Right cardiac atrium (tissue), 5 donors: ENCODE measurements at regions of chr2 and their contacts with region 1.

Region 1: GRCh38 chr2:52558265-52558664 is 1209.3 kb upstream of the CHAC2 start:
- DNase-seq: no peak
- ATAC-seq: no peak
- H3K4me3 ChIP-seq: no peak overlapping the region
- H3K27ac ChIP-seq: no peak overlapping the region
- H3K4me1 ChIP-seq: no peaks in the 10 kb centered on the region
- H3K27me3 ChIP-seq: no peaks in the 10 kb centered on the region

Region 2: GRCh38 chr2:52520644-52521043 is 37.6 kb before region 1 on chr2:
- intact Hi-C with region 1: loop called in 1 of 4 experiments (anchors 2 kb)
- DNase-seq: no peak
- ATAC-seq: no peak
- H3K4me3 ChIP-seq: no peak overlapping the region
- H3K27ac ChIP-seq: no peak overlapping the region
- H3K4me1 ChIP-seq: no peaks in the 10 kb centered on the region
- H3K27me3 ChIP-seq: no peaks in the 10 kb centered on the region

Region 3: GRCh38 chr2:52613064-52613463 is 54.8 kb after region 1 on chr2:
- intact Hi-C with region 1: no loop called
- DNase-seq: no peak
- ATAC-seq: no peak
- H3K4me3 ChIP-seq: no peak overlapping the region
- H3K27ac ChIP-seq: no peak overlapping the region
- H3K4me1 ChIP-seq: peaks cover 1% of the 10 kb centered on the region
- H3K27me3 ChIP-seq: no peaks in the 10 kb centered on the region

Region 4: DNA sequence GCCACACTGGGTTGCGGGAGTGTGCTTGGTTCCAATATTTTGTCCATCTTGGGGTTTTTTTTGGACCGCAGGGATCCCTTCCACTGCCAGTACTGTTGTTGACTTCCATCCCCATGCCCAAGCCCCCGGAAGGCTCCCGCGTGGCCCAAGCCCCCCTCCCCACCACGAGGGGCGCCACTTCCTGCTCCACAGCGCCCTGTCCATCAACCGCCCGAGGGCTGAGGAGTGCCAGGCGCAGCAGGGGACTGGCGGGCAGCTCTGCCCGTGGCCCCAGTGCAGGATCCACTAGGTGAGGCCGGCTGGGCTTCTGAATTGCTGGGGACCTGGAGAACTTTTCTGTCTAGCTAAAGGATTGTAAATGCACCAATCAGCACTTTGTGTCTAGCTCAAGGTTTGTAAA is 927.9 kb after region 1 on chr2:
- intact Hi-C with region 1: no loop called
- DNase-seq: peak in 1 of 3 donors; percentile 39
- ATAC-seq: no peak
- H3K4me3 ChIP-seq: no peak overlapping the region
- H3K27ac ChIP-seq: no peak overlapping the region
- H3K4me1 ChIP-seq: no peaks in the 10 kb centered on the region
- H3K27me3 ChIP-seq: no peaks in the 10 kb centered on the region